ENCODE measurements at regions of chr14 and their contacts with region 1.

Region 1: DNA sequence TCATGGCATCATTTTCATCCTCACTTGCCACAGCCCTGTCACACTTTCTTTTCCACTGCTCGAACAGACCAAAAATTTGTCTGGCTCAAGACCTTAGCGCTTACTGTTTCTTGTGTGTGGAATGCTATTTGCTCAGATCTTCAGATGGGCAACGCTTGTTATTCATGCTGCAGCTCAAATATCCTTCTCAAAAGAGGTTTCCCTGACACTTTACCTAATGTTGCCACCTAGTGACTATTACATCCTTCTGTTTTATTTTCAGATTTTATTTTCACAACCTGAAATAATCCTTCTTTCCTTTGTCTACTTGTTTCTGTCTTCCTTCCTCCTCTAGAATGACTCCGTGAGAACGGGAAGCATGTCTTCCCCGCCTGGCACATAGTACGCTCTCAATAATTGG is 5.6 kb downstream of the FBXO33 start:
- DNase-seq: peak; percentile 77
- H3K4me3 ChIP-seq: peak overlapping the region in 1 of 3 experiments; percentile 42
- H3K27ac ChIP-seq: no peak overlapping the region
- H3K4me1 ChIP-seq: peaks cover 31% of the 10 kb centered on the region
- H3K27me3 ChIP-seq: no peaks in the 10 kb centered on the region
- CTCF ChIP-seq: peak in 1 of 2 donors; percentile 3
- POLR2A ChIP-seq: no peak

Region 2: DNA sequence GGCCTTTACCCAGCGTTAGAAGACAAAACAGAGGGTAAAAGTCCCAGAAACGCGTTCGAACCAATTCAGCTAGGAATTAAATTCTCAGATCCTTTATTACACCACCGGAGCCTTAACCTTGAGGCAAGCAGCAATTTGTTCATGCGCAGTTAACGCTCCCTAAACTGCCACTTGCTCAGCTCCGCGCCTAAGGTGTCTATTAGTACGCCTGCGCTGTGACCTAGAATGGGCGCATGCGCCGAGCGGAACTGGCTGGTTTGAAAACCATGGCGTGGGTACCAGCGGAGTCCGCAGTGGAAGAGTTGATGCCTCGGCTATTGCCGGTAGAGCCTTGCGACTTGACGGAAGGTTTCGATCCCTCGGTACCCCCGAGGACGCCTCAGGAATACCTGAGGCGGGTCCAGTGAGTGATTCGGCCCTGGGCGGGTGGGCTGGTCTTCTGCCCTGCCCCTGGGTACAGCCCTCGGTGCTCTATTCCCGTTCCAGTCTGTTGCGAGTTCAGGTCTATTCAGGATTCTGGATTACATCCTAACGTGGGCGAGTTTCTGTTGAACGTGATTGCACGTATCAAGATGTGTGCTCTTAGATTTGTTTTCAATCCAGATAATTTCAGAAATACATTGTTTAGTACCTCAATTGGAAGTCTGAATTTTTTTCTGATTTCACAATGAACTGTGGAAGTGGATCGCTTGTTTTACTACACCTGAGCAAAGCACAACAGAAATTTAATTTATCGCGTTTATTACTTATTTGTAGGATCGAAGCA is 312.3 kb before region 1 on chr14 and contains the start of gene GEMIN2:
- CTCF ChIA-PET with region 1: interaction called, 10 read pairs
- POLR2A ChIA-PET with region 1: interaction called, 6 read pairs
- dilution Hi-C with region 1: no loop called
- intact Hi-C with region 1: no loop called
- DNase-seq: peak; percentile 97
- H3K4me3 ChIP-seq: peak within 1 kb of the TSS; percentile 48 to 92 (median 61)
- H3K27ac ChIP-seq: peak within 1 kb of the TSS; percentile 7
- H3K4me1 ChIP-seq: peaks cover 11% of the 10 kb centered on the region
- H3K27me3 ChIP-seq: no peaks in the 10 kb centered on the region
- CTCF ChIP-seq: no peak
- POLR2A ChIP-seq: peak; percentile 83
- total RNA-seq, gene GEMIN2: 19.5 and 20.0 TPM in 2 replicates

Region 3: GRCh38 chr14:39232554-39233415 is 193.8 kb before region 1 on chr14:
- CTCF ChIA-PET with region 1: interaction called, 19 read pairs
- POLR2A ChIA-PET with region 1: no interaction called
- dilution Hi-C with region 1: no loop called
- intact Hi-C with region 1: loop called (anchors 2 kb)
- DNase-seq: no peak
- H3K4me3 ChIP-seq: no peak overlapping the region
- H3K27ac ChIP-seq: no peak overlapping the region
- H3K4me1 ChIP-seq: no peaks in the 10 kb centered on the region
- H3K27me3 ChIP-seq: no peaks in the 10 kb centered on the region
- CTCF ChIP-seq: no peak
- POLR2A ChIP-seq: no peak

Region 4: GRCh38 chr14:39446131-39446744 is 19.6 kb after region 1 on chr14:
- CTCF ChIA-PET with region 1: no interaction called
- POLR2A ChIA-PET with region 1: no interaction called
- dilution Hi-C with region 1: no loop called
- intact Hi-C with region 1: no loop called
- DNase-seq: no peak
- H3K4me3 ChIP-seq: no peak overlapping the region
- H3K27ac ChIP-seq: no peak overlapping the region
- H3K4me1 ChIP-seq: no peaks in the 10 kb centered on the region
- H3K27me3 ChIP-seq: no peaks in the 10 kb centered on the region
- CTCF ChIP-seq: no peak
- POLR2A ChIP-seq: no peak